BJ (cell line): ENCODE measurements at regions of chr11 and their contacts with region 1.

Region 1: GRCh38 chr11:130390071-130390758 is 38.2 kb downstream of the ADAMTS8 start:
- DNase-seq: no peak
- H3K4me3 ChIP-seq: no peak overlapping the region
- H3K27me3 ChIP-seq: peaks cover 31% of the 10 kb centered on the region
- CTCF ChIP-seq: peak; percentile 70

Region 2: GRCh38 chr11:130427581-130428315 is 37.5 kb after region 1 on chr11:
- CTCF ChIA-PET with region 1: interaction called, 17 read pairs
- POLR2A ChIA-PET with region 1: no interaction called
- DNase-seq: no peak
- H3K4me3 ChIP-seq: no peak overlapping the region
- H3K27me3 ChIP-seq: peaks cover 51% of the 10 kb centered on the region
- CTCF ChIP-seq: peak; percentile 21; the same call in 1 of the 2 replicates

Region 3: GRCh38 chr11:130555251-130555841 is 165.1 kb after region 1 on chr11:
- CTCF ChIA-PET with region 1: no interaction called
- POLR2A ChIA-PET with region 1: no interaction called
- DNase-seq: no peak
- H3K4me3 ChIP-seq: no peak overlapping the region
- H3K27me3 ChIP-seq: no peaks in the 10 kb centered on the region
- CTCF ChIP-seq: no peak